Heart left ventricle (tissue), 16 donors: ENCODE measurements at regions of chr7 and their contacts with region 1.

Region 1: GRCh38 chr7:132806834-132807233 is 230.6 kb upstream of the PLXNA4 start:
- DNase-seq: no peak
- ATAC-seq: no peak
- H3K4me3 ChIP-seq: no peak overlapping the region
- H3K27ac ChIP-seq: no peak overlapping the region
- H3K4me1 ChIP-seq: peaks cover 0 to 19% (median 0%) of the 10 kb centered on the region in 12 donors
- H3K27me3 ChIP-seq: no peaks in the 10 kb centered on the region
- CTCF ChIP-seq: no peak
- POLR2A ChIP-seq: no peak

Region 2: GRCh38 chr7:132854238-132854637 is 47.4 kb after region 1 on chr7:
- intact Hi-C with region 1: no loop called
- DNase-seq: no peak
- ATAC-seq: no peak
- H3K4me3 ChIP-seq: no peak overlapping the region
- H3K27ac ChIP-seq: no peak overlapping the region
- H3K4me1 ChIP-seq: no peaks in the 10 kb centered on the region
- H3K27me3 ChIP-seq: no peaks in the 10 kb centered on the region
- CTCF ChIP-seq: no peak
- POLR2A ChIP-seq: no peak

Region 3: DNA sequence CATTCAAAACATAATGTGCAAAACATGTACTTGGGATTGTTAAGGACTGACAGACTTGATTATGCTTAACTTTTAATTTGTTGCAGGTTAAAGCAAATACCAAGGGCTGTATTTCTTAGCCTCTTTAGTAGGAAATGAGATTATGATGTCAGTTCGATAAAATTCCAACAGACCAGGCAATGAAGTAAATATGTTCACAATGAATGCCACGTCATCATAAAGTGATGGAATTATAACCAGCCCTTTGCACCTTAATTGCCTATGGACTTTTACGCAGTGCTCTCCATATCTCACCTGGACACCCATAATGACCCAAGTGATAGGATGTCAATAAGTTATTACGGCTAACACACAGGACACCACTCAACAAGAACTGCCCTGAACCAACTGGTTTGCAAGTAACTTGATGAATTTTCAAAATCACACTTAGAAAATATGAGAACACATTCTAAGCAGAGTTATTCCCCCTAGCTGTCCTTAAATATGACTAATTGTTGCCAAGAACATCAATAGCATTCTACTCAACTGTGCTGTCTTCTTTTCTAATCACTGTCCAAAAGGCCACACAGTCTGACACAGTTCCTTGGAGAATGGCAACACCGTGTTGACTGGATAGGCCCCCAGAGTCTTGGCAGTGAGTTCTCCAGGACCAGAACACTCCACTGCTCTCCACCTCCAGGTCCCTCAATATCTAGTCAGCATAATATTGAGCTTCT is 160.1 kb after region 1 on chr7:
- intact Hi-C with region 1: loop called in 1 of 10 experiments (anchors 10 kb)
- DNase-seq: no peak
- ATAC-seq: peak in 1 of 4 donors; percentile 36
- H3K4me3 ChIP-seq: no peak overlapping the region
- H3K27ac ChIP-seq: no peak overlapping the region
- H3K4me1 ChIP-seq: peaks cover 0 to 7% (median 0%) of the 10 kb centered on the region in 12 donors
- H3K27me3 ChIP-seq: no peaks in the 10 kb centered on the region
- CTCF ChIP-seq: no peak
- POLR2A ChIP-seq: no peak